PC-9 (cell line): ENCODE measurements at regions of chr5 and their contacts with region 1.

Region 1: GRCh38 chr5:132495667-132496190 is 5.2 kb upstream of the IRF1 start:
- DNase-seq: peak; percentile 79 to 90
- H3K4me3 ChIP-seq: peak overlapping the region; percentile 65
- H3K27ac ChIP-seq: peak overlapping the region; percentile 96
- H3K4me1 ChIP-seq: peaks cover 62% of the 10 kb centered on the region
- H3K27me3 ChIP-seq: no peaks in the 10 kb centered on the region
- CTCF ChIP-seq: no peak; the same call in 1 of the 2 replicates

Region 2: GRCh38 chr5:132265336-132266030 is 230.2 kb before region 1 on chr5:
- CTCF ChIA-PET with region 1: no interaction called
- POLR2A ChIA-PET with region 1: interaction called, 9 read pairs
- intact Hi-C with region 1: loop called (anchors 5 kb)
- DNase-seq: peak; percentile 87 to 91
- H3K4me3 ChIP-seq: no peak overlapping the region
- H3K27ac ChIP-seq: peak overlapping the region; percentile 58
- H3K4me1 ChIP-seq: peaks cover 47% of the 10 kb centered on the region
- H3K27me3 ChIP-seq: no peaks in the 10 kb centered on the region
- CTCF ChIP-seq: no peak; the same call in 1 of the 2 replicates

Region 3: DNA sequence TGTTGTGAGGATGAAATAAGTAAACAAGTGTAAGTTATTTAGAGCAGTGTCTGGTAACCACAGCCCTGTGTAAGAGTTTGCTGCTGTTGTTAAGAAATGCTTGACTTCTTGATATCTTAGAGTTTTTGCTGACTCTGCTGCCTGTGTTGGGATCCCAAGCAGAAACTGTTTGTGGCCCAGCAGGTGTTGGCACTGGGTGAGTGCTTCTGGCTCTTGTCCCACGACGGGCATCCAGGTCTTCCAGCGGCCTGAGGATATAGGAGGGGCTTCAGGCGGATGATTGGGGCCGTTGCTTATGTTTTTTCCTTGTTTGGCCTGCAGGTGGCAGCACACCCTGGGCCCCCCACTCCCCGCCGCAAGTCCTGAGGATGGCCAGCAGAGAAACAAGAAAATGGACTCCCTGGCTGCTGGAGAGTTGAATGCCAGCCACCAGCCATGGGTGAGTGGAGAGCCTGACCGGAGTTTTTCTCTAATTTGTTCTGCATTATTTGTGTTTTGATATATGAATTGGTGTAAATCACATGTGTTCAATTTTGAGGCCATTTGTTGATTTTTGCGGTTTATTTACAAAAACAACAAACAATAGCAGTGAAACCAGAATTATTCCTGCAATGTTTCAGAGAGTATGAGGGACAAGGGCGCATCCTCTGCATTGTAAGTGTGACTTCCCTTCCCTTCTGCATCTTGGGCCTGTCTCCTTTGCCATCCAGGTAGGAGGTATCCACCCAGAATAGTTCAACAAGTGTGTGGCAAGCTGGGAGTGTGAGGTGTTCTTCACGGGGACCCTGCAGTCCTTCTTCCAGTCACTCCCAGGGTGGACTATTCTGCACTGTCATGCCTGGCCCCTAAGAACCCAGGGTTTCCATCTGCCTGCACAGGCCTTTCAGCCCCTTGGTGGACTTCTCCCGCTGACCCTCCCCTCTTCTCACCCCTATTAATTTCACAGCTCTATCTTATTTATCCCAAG is 75.9 kb before region 1 on chr5:
- CTCF ChIA-PET with region 1: interaction called, 10 read pairs
- POLR2A ChIA-PET with region 1: interaction called, 14 read pairs
- intact Hi-C with region 1: loop called (anchors 1 kb)
- DNase-seq: peak; percentile 73 to 82
- H3K4me3 ChIP-seq: no peak overlapping the region
- H3K27ac ChIP-seq: no peak overlapping the region
- H3K4me1 ChIP-seq: peaks cover 74% of the 10 kb centered on the region
- H3K27me3 ChIP-seq: no peaks in the 10 kb centered on the region
- CTCF ChIP-seq: peak; percentile 86

Region 4: GRCh38 chr5:132439521-132440089 is 56.1 kb before region 1 on chr5:
- CTCF ChIA-PET with region 1: no interaction called
- POLR2A ChIA-PET with region 1: interaction called, 14 read pairs
- intact Hi-C with region 1: loop called (anchors 2 kb)
- DNase-seq: no peak
- H3K4me3 ChIP-seq: no peak overlapping the region
- H3K27ac ChIP-seq: no peak overlapping the region
- H3K4me1 ChIP-seq: peaks cover 4% of the 10 kb centered on the region
- H3K27me3 ChIP-seq: no peaks in the 10 kb centered on the region
- CTCF ChIP-seq: no peak

Region 5: DNA sequence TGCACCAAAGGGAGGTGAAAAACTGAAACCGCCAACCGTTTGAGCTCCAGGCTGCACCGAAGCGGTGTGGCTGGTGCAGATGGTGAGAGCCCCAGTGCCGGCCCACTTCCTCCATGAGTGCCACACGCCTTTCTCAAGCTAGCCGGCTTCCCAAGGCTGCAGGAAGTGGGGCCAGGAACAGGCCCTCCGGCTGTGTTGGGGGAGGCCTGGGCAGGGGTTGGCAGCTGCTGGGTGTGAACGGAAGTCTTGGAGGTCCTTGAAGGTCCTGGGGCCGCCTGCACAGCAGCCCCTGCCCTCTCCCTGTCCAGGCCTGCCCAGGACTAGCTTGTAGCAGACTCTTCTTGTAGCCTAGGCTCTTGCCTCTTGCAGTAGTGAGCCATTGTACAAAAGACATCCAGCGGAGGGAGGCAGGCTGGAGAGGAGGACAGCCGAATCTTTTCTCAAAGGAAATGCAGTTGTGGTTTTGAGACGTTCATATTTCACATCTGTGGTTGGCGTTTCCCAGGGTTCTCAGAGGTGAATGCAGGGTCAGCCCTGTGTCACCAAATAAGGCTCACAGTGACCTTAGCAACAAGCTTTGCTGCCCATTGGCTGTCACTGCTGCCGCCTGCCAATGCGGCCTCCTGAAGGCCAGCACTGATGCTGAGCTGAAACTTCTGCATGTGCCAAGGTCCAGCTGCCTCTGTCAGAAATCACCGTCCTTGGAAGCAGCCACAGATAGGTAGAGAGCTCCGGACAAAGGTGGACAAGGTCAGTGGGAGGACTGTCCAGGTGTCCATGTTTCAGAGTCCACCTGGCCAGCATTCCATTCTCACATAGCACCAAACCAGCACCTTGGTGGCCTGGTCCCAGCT is 29.1 kb before region 1 on chr5:
- CTCF ChIA-PET with region 1: interaction called, 7 read pairs
- POLR2A ChIA-PET with region 1: interaction called, 13 read pairs
- intact Hi-C with region 1: loop called (anchors 2 kb)
- DNase-seq: peak in 1 of 2 experiments; percentile 59
- H3K4me3 ChIP-seq: no peak overlapping the region
- H3K27ac ChIP-seq: no peak overlapping the region
- H3K4me1 ChIP-seq: peaks cover 29% of the 10 kb centered on the region
- H3K27me3 ChIP-seq: no peaks in the 10 kb centered on the region
- CTCF ChIP-seq: no peak

Region 6: GRCh38 chr5:132688536-132689339 is 193.0 kb after region 1 on chr5:
- CTCF ChIA-PET with region 1: no interaction called
- POLR2A ChIA-PET with region 1: no interaction called
- intact Hi-C with region 1: no loop called
- DNase-seq: no peak
- H3K4me3 ChIP-seq: no peak overlapping the region
- H3K27ac ChIP-seq: no peak overlapping the region
- H3K4me1 ChIP-seq: no peaks in the 10 kb centered on the region
- H3K27me3 ChIP-seq: no peaks in the 10 kb centered on the region
- CTCF ChIP-seq: no peak